GM12878 (cell line): ENCODE measurements at regions of chr11 and their contacts with region 1.

Region 1: DNA sequence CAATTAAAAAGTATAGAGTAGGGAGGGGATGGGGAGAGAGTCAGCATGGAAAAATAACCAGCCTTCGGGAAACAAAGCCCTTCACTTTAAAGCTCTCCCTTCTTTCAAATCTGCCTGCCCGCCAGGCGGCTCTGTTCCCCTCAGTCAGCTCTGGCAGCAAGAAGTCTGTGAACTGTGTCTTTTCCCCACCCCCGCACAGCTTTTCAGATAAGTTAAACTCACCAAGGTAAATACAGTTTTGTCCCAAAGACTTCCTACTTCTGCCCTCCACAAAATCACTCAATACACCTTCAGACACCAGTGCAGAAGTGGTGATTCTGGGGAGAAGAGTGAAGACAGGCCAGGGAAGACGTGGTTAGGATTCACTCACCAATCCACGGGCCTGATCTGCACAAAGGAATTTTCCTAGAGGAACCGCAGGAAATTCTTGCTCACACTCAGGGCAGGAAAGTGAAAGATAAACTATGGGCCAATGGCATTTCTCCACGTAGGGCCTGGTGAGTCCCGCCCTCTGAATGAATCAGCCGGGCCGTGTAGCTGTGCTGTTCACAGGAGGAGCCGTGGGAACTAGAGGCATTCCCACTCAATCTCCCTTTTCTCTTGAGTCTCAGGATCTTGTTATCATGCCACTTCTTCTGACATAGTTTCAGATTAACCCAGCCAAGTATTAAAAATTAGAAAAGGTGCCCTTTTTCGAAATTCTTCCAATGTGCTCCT is at the start of gene TRIM5:
- DNase-seq: peak; percentile 86
- ATAC-seq: peak; percentile 87
- H3K4me3 ChIP-seq: peak within 1 kb of the TSS; percentile 87
- H3K27ac ChIP-seq: peak within 1 kb of the TSS; percentile 94
- H3K4me1 ChIP-seq: peaks cover 8% of the 10 kb centered on the region
- H3K27me3 ChIP-seq: no peaks in the 10 kb centered on the region
- CTCF ChIP-seq: peak; percentile 74 to 78 (median 76)
- EP300 ChIP-seq: peak in 1 of 2 experiments; percentile 15; a peak in 1 of 4 replicates
- POLR2A ChIP-seq: peak; percentile 60; the same call in 1 of the 2 replicates
- RAD21 ChIP-seq: peak; percentile 80
- polyA plus RNA-seq, gene TRIM5: 20.0 to 21.8 TPM

Region 2: DNA sequence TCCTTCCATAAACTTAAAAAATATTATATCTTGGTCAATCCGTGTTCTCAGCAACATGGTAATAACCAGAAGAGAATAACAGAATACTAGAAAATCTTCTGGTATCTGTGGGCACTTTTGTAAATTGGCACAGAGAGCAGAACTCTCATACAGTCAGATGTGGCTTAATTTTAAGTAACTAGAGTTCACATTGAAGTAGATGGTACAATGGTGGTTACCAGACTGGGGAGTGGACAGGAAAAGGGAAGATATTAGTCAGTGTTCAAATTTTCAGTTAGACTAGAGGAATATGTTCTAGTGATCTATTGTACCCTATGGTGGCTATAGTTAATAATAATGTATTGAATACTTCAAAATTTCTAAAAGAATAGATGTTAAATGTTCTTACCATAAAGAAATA is 143.4 kb before region 1 on chr11:
- CTCF ChIA-PET with region 1: no interaction called
- POLR2A ChIA-PET with region 1: no interaction called
- RAD21 ChIA-PET with region 1: no interaction called
- SMC1A ChIA-PET with region 1: no interaction called
- in situ Hi-C with region 1: no loop called
- intact Hi-C with region 1: no loop called
- DNase-seq: no peak
- ATAC-seq: peak; percentile 89
- H3K4me3 ChIP-seq: no peak overlapping the region
- H3K27ac ChIP-seq: no peak overlapping the region
- H3K4me1 ChIP-seq: no peaks in the 10 kb centered on the region
- H3K27me3 ChIP-seq: no peaks in the 10 kb centered on the region
- CTCF ChIP-seq: no peak
- EP300 ChIP-seq: no peak
- POLR2A ChIP-seq: no peak
- RAD21 ChIP-seq: no peak

Region 3: GRCh38 chr11:5575152-5575551 is 109.7 kb before region 1 on chr11:
- CTCF ChIA-PET with region 1: no interaction called
- POLR2A ChIA-PET with region 1: no interaction called
- RAD21 ChIA-PET with region 1: no interaction called
- SMC1A ChIA-PET with region 1: no interaction called
- in situ Hi-C with region 1: no loop called
- intact Hi-C with region 1: no loop called
- DNase-seq: no peak
- ATAC-seq: no peak
- H3K4me3 ChIP-seq: no peak overlapping the region
- H3K27ac ChIP-seq: no peak overlapping the region
- H3K4me1 ChIP-seq: no peaks in the 10 kb centered on the region
- H3K27me3 ChIP-seq: no peaks in the 10 kb centered on the region
- CTCF ChIP-seq: no peak
- EP300 ChIP-seq: no peak
- POLR2A ChIP-seq: no peak
- RAD21 ChIP-seq: no peak

Region 4: GRCh38 chr11:5600374-5600851 is 84.4 kb before region 1 on chr11:
- CTCF ChIA-PET with region 1: interaction called, 19 read pairs
- POLR2A ChIA-PET with region 1: interaction called, 4 read pairs
- RAD21 ChIA-PET with region 1: interaction called, 13 read pairs
- SMC1A ChIA-PET with region 1: interaction called, 21 read pairs
- in situ Hi-C with region 1: no loop called
- intact Hi-C with region 1: no loop called
- DNase-seq: peak; percentile 23
- ATAC-seq: peak; percentile 98
- H3K4me3 ChIP-seq: no peak overlapping the region
- H3K27ac ChIP-seq: no peak overlapping the region
- H3K4me1 ChIP-seq: no peaks in the 10 kb centered on the region; the same call in 1 of the 2 replicates
- H3K27me3 ChIP-seq: no peaks in the 10 kb centered on the region
- CTCF ChIP-seq: peak; percentile 80 to 94 (median 87)
- EP300 ChIP-seq: no peak
- POLR2A ChIP-seq: no peak
- RAD21 ChIP-seq: peak; percentile 84

Region 5: DNA sequence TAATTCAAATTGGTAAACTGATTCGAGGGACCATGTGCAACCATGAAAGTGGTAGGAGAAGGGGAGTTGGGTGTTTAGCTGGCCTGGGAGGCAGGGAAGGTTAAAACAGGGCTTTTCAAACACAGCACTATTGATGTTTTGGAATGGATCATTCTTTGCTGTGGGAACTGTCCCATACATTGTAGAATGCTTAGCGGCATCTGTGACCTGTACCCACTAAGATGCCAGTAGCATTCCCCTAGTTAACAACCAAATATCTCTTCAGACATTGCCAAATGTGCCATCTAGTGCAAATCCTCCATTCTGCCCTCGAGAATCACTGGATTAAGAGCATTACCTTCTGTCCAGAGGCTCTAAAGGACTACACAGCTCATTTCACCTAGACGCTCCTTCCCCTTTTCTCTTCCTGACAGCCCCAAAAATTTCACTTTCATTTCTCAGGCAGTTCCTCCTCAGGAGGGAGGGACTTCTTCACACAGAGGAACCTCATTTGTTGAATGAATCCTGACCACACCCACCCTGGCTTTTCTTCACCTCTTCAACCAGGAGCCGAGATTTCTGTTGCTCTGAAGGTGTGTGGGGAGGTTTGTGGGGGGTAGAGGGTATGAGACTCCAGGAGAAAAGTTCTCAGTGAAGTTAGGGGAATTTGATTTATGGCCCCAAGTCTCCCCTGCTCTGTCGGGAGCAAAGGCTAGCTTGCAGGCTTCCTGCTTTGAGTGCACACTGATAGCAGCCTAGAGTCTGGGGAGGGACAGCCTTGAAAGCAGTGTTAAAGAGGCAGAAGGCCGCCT is 60.1 kb before region 1 on chr11 and contains the start of gene TRIM34:
- CTCF ChIA-PET with region 1: interaction called, 25 read pairs
- POLR2A ChIA-PET with region 1: interaction called, 38 read pairs
- RAD21 ChIA-PET with region 1: interaction called, 20 read pairs
- SMC1A ChIA-PET with region 1: interaction called, 21 read pairs
- in situ Hi-C with region 1: no loop called
- intact Hi-C with region 1: loop called (anchors 2 kb)
- DNase-seq: peak; percentile 90
- ATAC-seq: peak; percentile 94
- H3K4me3 ChIP-seq: peak within 1 kb of the TSS; percentile 97
- H3K27ac ChIP-seq: peak within 1 kb of the TSS; percentile 100
- H3K4me1 ChIP-seq: peaks cover 2% of the 10 kb centered on the region; the same call in 1 of the 2 replicates
- H3K27me3 ChIP-seq: no peaks in the 10 kb centered on the region
- CTCF ChIP-seq: no peak
- EP300 ChIP-seq: no peak
- POLR2A ChIP-seq: peak; percentile 84
- RAD21 ChIP-seq: no peak
- polyA plus RNA-seq, gene TRIM34: 22.0 to 33.6 TPM

Region 6: DNA sequence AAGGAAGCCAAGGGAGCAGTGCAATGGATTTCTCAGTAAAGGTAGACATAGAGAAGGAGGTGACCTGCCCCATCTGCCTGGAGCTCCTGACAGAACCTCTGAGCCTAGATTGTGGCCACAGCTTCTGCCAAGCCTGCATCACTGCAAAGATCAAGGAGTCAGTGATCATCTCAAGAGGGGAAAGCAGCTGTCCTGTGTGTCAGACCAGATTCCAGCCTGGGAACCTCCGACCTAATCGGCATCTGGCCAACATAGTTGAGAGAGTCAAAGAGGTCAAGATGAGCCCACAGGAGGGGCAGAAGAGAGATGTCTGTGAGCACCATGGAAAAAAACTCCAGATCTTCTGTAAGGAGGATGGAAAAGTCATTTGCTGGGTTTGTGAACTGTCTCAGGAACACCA is 11.4 kb after region 1 on chr11:
- CTCF ChIA-PET with region 1: interaction called, 37 read pairs
- POLR2A ChIA-PET with region 1: interaction called, 58 read pairs
- RAD21 ChIA-PET with region 1: interaction called, 61 read pairs
- SMC1A ChIA-PET with region 1: interaction called, 96 read pairs
- in situ Hi-C with region 1: no loop called
- intact Hi-C with region 1: no loop called
- DNase-seq: no peak
- ATAC-seq: no peak
- H3K4me3 ChIP-seq: no peak overlapping the region
- H3K27ac ChIP-seq: no peak overlapping the region
- H3K4me1 ChIP-seq: no peaks in the 10 kb centered on the region; the same call in 1 of the 2 replicates
- H3K27me3 ChIP-seq: no peaks in the 10 kb centered on the region
- CTCF ChIP-seq: no peak
- EP300 ChIP-seq: no peak
- POLR2A ChIP-seq: no peak
- RAD21 ChIP-seq: no peak

Region 7: DNA sequence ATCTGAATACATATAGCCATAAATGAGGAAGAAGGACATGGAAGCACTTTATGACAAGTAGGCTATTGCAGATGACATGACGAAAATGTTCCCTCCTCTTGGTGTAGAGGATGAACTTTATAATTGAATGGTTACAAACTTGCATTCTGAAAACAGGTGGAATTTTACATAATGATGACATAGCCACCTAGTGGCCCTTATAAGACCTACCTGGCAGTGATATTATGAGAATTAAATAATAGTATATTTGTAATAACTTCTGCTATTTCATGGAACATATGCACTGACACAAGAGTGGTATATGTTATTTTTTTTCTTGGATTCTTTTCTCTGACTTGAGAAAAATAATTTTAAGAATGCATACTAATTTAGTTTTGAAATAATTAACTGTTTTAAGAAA is 27.7 kb after region 1 on chr11:
- CTCF ChIA-PET with region 1: interaction called, 28 read pairs
- POLR2A ChIA-PET with region 1: interaction called, 5 read pairs
- RAD21 ChIA-PET with region 1: interaction called, 26 read pairs
- SMC1A ChIA-PET with region 1: interaction called, 45 read pairs
- in situ Hi-C with region 1: no loop called
- intact Hi-C with region 1: no loop called
- DNase-seq: no peak
- ATAC-seq: peak; percentile 72
- H3K4me3 ChIP-seq: no peak overlapping the region
- H3K27ac ChIP-seq: no peak overlapping the region
- H3K4me1 ChIP-seq: no peaks in the 10 kb centered on the region
- H3K27me3 ChIP-seq: no peaks in the 10 kb centered on the region
- CTCF ChIP-seq: peak; percentile 24 to 60 (median 50); a peak in 4 of 6 replicates
- EP300 ChIP-seq: no peak
- POLR2A ChIP-seq: no peak
- RAD21 ChIP-seq: peak; percentile 58